IMR-90 (cell line): ENCODE measurements at regions of chr2 and their contacts with region 1.

Region 1: DNA sequence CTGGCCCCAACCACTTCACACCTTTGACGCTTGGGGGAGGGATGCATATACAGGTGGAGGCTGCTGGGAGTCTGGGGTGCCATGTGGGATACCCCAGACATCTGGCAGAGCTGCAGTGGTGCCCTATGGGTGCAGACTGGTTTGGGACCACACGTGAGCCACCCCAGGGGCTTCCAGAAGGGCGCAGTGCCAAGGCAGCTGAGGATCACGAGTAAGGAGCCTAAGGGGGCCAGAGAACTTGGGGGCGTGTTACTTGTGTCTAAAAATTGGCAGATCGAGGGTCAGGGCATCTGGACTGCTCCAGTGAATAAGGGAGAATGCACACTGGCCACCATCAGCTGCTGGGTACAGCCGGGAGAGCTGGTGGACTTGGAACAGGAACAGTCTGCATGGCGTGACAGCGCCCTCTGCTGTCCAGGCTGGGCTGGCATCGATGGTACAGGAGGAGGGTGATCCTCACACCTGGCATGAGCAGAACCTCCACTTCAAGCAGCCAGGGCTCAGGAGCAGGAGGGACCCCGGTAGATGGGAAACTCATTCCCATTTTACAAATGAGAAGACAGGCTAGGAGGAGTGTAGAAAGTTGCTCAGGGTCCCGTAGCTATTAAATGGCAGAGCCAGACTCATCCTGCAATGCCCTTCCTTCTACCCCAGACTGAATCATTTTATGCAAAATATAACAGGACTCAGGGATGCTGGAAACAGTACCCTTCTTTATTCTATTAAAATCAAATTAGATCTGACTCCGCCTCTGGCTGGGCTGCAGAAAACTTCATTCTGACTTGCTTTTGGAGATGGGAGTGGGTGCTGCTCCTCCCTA is 60.4 kb downstream of the ATOH8 start:
- DNase-seq: peak; percentile 83
- ATAC-seq: peak; percentile 96
- H3K4me3 ChIP-seq: no peak overlapping the region
- H3K27ac ChIP-seq: no peak overlapping the region
- H3K4me1 ChIP-seq: peaks cover 16% of the 10 kb centered on the region
- H3K27me3 ChIP-seq: peaks cover 2% of the 10 kb centered on the region; the same call in 1 of the 2 replicates
- CTCF ChIP-seq: peak; percentile 98
- POLR2A ChIP-seq: peak; percentile 51
- RAD21 ChIP-seq: peak; percentile 100

Region 2: DNA sequence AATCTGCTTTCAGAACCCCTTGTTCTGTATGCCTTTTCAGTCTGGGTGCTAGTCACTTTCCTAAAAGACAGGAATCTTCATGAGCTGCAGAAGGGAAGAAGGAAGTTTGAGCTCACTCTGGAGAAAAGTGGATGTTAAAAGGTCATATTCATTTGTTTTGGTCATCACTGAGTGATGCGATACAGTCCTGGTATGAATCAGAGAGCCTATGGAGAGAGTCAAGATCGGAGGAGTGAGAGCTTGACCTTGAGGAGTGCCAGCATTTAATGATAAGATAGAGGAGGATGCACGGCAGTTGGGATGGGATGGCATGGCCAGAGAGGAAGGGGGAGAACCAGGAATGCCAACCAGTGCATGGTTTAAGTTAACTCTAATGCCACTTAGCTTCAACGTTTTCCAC is 178.6 kb before region 1 on chr2:
- CTCF ChIA-PET with region 1: interaction called, 3 read pairs
- POLR2A ChIA-PET with region 1: no interaction called
- dilution Hi-C with region 1: no loop called
- in situ Hi-C with region 1: loop called (anchors 5 kb)
- intact Hi-C with region 1: no loop called
- DNase-seq: peak; percentile 50
- ATAC-seq: peak; percentile 68
- H3K4me3 ChIP-seq: no peak overlapping the region
- H3K27ac ChIP-seq: no peak overlapping the region
- H3K4me1 ChIP-seq: 0 out of 2 replicates have a peak, but pooled peaks cover 4% of the 10 kb centered on the region
- H3K27me3 ChIP-seq: no peaks in the 10 kb centered on the region
- CTCF ChIP-seq: no peak
- POLR2A ChIP-seq: no peak
- RAD21 ChIP-seq: no peak

Region 3: DNA sequence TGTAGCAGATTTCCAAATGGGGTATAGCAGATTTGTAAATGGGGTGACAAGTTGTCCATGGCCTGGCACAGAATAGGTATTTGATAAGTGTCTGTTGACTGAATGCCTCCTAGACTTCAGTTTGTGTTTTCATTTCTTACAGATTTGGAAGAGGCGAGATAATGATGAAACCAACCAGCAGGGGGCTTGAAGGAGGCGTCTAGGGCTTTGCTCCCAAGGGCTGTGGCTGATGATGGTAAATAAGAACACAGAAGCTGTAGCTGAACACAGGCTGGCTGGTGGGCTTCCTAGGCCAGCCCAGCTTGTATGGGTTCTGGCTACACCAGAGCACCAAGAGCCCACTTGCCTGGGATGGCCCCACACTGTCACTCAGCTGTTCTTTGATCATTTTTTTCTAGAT is 165.6 kb before region 1 on chr2:
- CTCF ChIA-PET with region 1: interaction called, 8 read pairs
- POLR2A ChIA-PET with region 1: no interaction called
- dilution Hi-C with region 1: no loop called
- in situ Hi-C with region 1: no loop called
- intact Hi-C with region 1: loop called (anchors 1 kb)
- DNase-seq: peak; percentile 70
- ATAC-seq: peak; percentile 55
- H3K4me3 ChIP-seq: no peak overlapping the region
- H3K27ac ChIP-seq: peak overlapping the region; percentile 99
- H3K4me1 ChIP-seq: peaks cover 27% of the 10 kb centered on the region
- H3K27me3 ChIP-seq: no peaks in the 10 kb centered on the region
- CTCF ChIP-seq: peak; percentile 65
- POLR2A ChIP-seq: no peak
- RAD21 ChIP-seq: peak; percentile 67

Region 4: DNA sequence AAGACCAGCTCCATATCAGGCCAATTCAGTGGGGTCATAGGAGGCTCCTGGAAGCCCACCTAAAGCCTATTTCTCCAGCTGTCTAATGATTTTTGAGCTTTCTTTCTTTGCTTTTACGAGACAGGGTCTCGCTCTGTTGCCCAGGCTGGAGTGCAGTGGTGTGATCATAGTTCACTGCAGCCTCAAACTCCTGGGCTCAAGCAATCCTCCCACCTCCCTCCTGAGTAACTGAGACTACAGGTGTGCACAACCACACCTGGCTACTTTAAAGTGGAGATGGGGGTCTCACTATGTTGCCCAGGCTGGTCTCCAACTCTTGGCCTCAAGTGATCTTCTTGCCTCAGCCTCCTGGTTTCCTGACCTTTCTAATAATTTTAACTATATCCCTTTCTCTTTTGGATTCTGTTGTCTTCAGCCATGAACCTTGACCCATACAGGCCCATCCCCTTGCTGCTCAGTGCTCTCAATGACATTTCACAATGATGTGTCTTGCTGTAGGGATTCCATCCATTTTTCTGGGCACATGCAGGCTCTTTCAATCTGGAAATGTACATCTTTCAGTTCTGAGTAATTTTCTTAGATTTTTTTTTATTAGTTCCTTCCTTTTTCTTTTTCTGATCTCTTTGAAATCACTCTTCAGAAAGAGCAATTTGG is 90.4 kb before region 1 on chr2:
- CTCF ChIA-PET with region 1: interaction called, 33 read pairs
- POLR2A ChIA-PET with region 1: no interaction called
- dilution Hi-C with region 1: no loop called
- in situ Hi-C with region 1: no loop called
- intact Hi-C with region 1: loop called (anchors 1 kb)
- DNase-seq: peak; percentile 50
- ATAC-seq: peak; percentile 81
- H3K4me3 ChIP-seq: no peak overlapping the region
- H3K27ac ChIP-seq: no peak overlapping the region
- H3K4me1 ChIP-seq: peaks cover 5% of the 10 kb centered on the region
- H3K27me3 ChIP-seq: peaks cover 7% of the 10 kb centered on the region; the same call in 1 of the 2 replicates
- CTCF ChIP-seq: no peak
- POLR2A ChIP-seq: no peak
- RAD21 ChIP-seq: no peak

Region 5: GRCh38 chr2:85728883-85729824 is 85.0 kb before region 1 on chr2:
- CTCF ChIA-PET with region 1: interaction called, 33 read pairs
- POLR2A ChIA-PET with region 1: no interaction called
- dilution Hi-C with region 1: no loop called
- in situ Hi-C with region 1: no loop called
- intact Hi-C with region 1: loop called (anchors 1 kb)
- DNase-seq: peak; percentile 72
- ATAC-seq: peak; percentile 98
- H3K4me3 ChIP-seq: no peak overlapping the region
- H3K27ac ChIP-seq: no peak overlapping the region
- H3K4me1 ChIP-seq: peaks cover 5% of the 10 kb centered on the region
- H3K27me3 ChIP-seq: no peaks in the 10 kb centered on the region
- CTCF ChIP-seq: peak; percentile 99
- POLR2A ChIP-seq: peak; percentile 43; the same call in 1 of the 2 replicates
- RAD21 ChIP-seq: peak; percentile 100

Region 6: GRCh38 chr2:85741833-85742455 is 72.2 kb before region 1 on chr2:
- CTCF ChIA-PET with region 1: interaction called, 4 read pairs
- POLR2A ChIA-PET with region 1: no interaction called
- dilution Hi-C with region 1: no loop called
- in situ Hi-C with region 1: loop called (anchors 5 kb)
- intact Hi-C with region 1: no loop called
- DNase-seq: peak; percentile 96
- ATAC-seq: peak; percentile 78
- H3K4me3 ChIP-seq: no peak overlapping the region
- H3K27ac ChIP-seq: peak overlapping the region; percentile 90
- H3K4me1 ChIP-seq: peaks cover 46% of the 10 kb centered on the region
- H3K27me3 ChIP-seq: no peaks in the 10 kb centered on the region
- CTCF ChIP-seq: no peak
- POLR2A ChIP-seq: no peak; the same call in 1 of the 2 replicates
- RAD21 ChIP-seq: no peak

Region 7: GRCh38 chr2:85750587-85751575 is 63.3 kb before region 1 on chr2:
- CTCF ChIA-PET with region 1: interaction called, 12 read pairs
- POLR2A ChIA-PET with region 1: no interaction called
- dilution Hi-C with region 1: no loop called
- in situ Hi-C with region 1: no loop called
- intact Hi-C with region 1: loop called (anchors 1 kb)
- DNase-seq: peak; percentile 58
- ATAC-seq: peak; percentile 51
- H3K4me3 ChIP-seq: no peak overlapping the region
- H3K27ac ChIP-seq: no peak overlapping the region
- H3K4me1 ChIP-seq: peaks cover 14% of the 10 kb centered on the region
- H3K27me3 ChIP-seq: no peaks in the 10 kb centered on the region; the same call in 1 of the 2 replicates
- CTCF ChIP-seq: peak; percentile 81
- POLR2A ChIP-seq: no peak
- RAD21 ChIP-seq: peak; percentile 84

Region 8: GRCh38 chr2:85971366-85971765 is 157.2 kb after region 1 on chr2:
- CTCF ChIA-PET with region 1: no interaction called
- POLR2A ChIA-PET with region 1: no interaction called
- dilution Hi-C with region 1: no loop called
- in situ Hi-C with region 1: no loop called
- intact Hi-C with region 1: no loop called
- DNase-seq: peak; percentile 74
- ATAC-seq: peak; percentile 66
- H3K4me3 ChIP-seq: no peak overlapping the region
- H3K27ac ChIP-seq: no peak overlapping the region
- H3K4me1 ChIP-seq: no peaks in the 10 kb centered on the region; the same call in 1 of the 2 replicates
- H3K27me3 ChIP-seq: peaks cover 23% of the 10 kb centered on the region
- CTCF ChIP-seq: no peak
- POLR2A ChIP-seq: no peak
- RAD21 ChIP-seq: no peak

Region 9: DNA sequence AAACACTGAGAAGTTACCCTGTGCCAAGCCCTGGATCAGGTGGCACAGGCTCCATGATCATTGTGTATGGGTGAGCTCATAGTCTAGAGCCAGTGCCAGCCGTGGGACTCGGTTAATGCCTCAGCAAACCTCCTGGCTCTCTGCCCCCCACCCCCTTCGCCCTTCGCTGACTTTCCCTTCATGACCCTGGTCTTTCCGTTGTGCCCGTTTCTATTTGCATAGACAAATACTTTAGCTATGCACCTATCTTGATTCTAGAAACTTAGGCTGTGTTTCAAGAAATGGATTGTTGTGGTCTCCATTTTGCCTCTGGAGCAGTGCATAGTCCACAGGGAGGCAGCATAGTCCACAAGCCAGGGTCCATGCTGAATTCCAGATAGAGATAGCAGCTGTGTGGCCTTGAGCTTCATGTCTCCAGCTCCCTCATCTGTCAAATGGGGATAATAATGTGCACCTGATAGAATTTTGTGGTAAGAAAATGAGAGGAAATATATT is 582.1 kb after region 1 on chr2:
- CTCF ChIA-PET with region 1: no interaction called
- POLR2A ChIA-PET with region 1: no interaction called
- dilution Hi-C with region 1: no loop called
- in situ Hi-C with region 1: no loop called
- intact Hi-C with region 1: no loop called
- DNase-seq: peak; percentile 20
- ATAC-seq: peak; percentile 59; the same call in 1 of the 2 replicates
- H3K4me3 ChIP-seq: no peak overlapping the region
- H3K27ac ChIP-seq: no peak overlapping the region
- H3K4me1 ChIP-seq: no peaks in the 10 kb centered on the region
- H3K27me3 ChIP-seq: peaks cover 8% of the 10 kb centered on the region
- CTCF ChIP-seq: peak; percentile 38; the same call in 1 of the 2 replicates
- POLR2A ChIP-seq: no peak
- RAD21 ChIP-seq: peak; percentile 41